ENCODE measurements at regions of chr10 and their contacts with region 1.

Region 1: GRCh38 chr10:132331526-132332432 is at the start of gene LRRC27:
- DNase-seq: peak; percentile 99
- ATAC-seq: peak; percentile 86
- H3K4me3 Mint-ChIP-seq: peak within 1 kb of the TSS; percentile 80
- H3K27ac Mint-ChIP-seq: peak within 1 kb of the TSS; percentile 81
- H3K4me1 Mint-ChIP-seq: peaks cover 56% of the 10 kb centered on the region
- H3K27me3 Mint-ChIP-seq: no peaks in the 10 kb centered on the region
- total RNA-seq, gene LRRC27: 3.6 to 4.1 TPM

Region 2: DNA sequence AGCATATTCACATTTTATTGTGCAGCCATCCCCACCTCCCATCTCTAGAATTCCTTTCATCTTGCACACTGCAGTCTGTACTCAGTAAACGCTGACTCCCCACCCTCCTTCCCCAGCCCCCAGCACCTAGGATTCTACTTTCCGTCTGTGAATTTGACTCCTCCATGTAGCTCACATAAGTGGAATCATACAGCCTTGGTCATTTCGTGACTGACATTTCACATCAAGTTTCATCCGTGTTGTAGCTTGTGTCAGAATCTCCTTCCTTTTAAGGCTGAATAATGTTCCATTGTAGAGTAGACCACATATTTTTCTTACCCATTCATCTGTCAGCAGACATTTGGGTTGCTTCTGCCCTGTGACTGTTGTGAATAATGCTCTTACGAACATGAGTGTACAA is 994.0 kb before region 1 on chr10:
- CTCF ChIA-PET with region 1: no interaction called
- POLR2A ChIA-PET with region 1: no interaction called
- intact Hi-C with region 1: no loop called
- DNase-seq: no peak
- ATAC-seq: no peak
- H3K4me3 Mint-ChIP-seq: no peak overlapping the region
- H3K27ac Mint-ChIP-seq: no peak overlapping the region
- H3K4me1 Mint-ChIP-seq: no peaks in the 10 kb centered on the region
- H3K27me3 Mint-ChIP-seq: peaks cover 4% of the 10 kb centered on the region

Region 3: DNA sequence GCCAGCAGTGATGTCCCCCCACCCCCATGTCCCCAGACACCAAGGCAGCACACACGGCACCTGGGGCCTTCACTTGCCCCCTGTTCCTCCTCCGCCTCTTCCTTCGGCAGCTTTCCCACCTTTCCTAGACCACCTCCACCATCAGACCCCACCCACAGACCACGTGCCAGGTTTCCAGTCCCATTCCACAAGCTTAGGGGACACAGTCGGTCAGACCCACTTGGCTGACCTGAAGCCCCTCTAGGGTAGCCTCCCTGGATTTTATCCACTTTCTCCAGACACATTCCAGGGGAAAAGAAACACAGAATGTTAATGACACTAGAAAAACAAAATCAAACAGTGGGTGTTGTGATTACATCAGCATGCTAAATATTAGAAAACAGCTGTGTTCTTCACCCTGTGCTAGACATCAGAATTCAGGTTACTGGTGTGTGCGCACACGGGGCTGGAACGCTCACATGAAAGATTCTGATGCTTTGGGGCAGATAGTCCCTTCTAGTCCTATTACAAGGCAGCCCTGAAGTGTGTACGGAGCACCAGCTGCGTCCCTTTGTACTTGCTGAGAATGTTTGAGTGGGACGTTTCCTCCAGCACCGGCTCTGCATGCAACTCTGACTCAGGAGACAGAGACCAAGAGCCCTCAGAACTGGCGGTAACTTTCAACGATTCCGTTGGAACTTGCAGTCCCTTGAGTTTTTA is 506.5 kb before region 1 on chr10:
- CTCF ChIA-PET with region 1: no interaction called
- POLR2A ChIA-PET with region 1: no interaction called
- intact Hi-C with region 1: no loop called
- DNase-seq: no peak
- ATAC-seq: no peak
- H3K4me3 Mint-ChIP-seq: no peak overlapping the region
- H3K27ac Mint-ChIP-seq: no peak overlapping the region
- H3K4me1 Mint-ChIP-seq: no peaks in the 10 kb centered on the region
- H3K27me3 Mint-ChIP-seq: peaks cover 13% of the 10 kb centered on the region

Region 4: DNA sequence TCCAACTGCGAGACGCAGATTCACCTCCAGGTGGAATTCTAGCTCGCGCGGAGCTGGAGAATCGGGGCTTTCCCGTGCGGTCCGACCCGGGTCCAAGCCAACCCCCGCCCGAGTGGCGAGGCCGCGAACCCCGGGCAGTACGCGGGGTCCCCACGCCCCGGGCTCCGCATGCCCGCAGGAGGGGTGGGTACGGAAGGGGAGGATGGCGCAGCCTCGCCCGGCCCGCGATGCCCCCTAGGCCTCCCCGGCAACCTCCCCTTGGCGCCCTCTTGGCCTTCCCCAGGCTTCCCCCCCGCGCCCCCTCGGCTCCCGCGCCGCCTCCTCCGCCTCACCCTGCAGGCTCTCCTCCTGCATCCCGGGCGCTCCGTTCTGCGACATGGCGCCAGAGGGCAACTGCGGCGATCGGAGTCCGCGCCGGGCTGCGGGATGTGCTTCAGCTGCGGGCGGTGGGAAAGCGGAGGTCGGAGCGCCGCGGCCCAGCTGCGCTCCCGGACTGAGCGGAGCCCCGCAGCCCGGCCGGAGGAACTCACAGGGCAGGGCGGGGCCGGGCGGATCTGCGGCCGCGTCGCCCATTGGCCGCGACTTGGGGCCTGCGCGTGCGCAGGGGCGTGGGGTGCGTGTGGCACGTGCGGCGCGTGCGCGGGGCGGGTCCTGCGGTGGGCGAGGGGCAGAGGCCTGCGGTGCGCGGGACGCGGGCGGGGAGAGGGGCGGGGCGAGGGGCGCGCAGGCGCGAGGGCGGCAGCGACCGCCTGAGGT is 350.2 kb before region 1 on chr10 and contains the start of gene BNIP3:
- CTCF ChIA-PET with region 1: no interaction called
- POLR2A ChIA-PET with region 1: no interaction called
- intact Hi-C with region 1: loop called in 1 of 2 experiments (anchors 1 kb)
- DNase-seq: peak; percentile 97
- ATAC-seq: peak; percentile 90
- H3K4me3 Mint-ChIP-seq: peak within 1 kb of the TSS; percentile 90
- H3K27ac Mint-ChIP-seq: peak within 1 kb of the TSS; percentile 79
- H3K4me1 Mint-ChIP-seq: peaks cover 36% of the 10 kb centered on the region
- H3K27me3 Mint-ChIP-seq: no peaks in the 10 kb centered on the region
- total RNA-seq, gene BNIP3: 200 to 256 TPM

Region 5: DNA sequence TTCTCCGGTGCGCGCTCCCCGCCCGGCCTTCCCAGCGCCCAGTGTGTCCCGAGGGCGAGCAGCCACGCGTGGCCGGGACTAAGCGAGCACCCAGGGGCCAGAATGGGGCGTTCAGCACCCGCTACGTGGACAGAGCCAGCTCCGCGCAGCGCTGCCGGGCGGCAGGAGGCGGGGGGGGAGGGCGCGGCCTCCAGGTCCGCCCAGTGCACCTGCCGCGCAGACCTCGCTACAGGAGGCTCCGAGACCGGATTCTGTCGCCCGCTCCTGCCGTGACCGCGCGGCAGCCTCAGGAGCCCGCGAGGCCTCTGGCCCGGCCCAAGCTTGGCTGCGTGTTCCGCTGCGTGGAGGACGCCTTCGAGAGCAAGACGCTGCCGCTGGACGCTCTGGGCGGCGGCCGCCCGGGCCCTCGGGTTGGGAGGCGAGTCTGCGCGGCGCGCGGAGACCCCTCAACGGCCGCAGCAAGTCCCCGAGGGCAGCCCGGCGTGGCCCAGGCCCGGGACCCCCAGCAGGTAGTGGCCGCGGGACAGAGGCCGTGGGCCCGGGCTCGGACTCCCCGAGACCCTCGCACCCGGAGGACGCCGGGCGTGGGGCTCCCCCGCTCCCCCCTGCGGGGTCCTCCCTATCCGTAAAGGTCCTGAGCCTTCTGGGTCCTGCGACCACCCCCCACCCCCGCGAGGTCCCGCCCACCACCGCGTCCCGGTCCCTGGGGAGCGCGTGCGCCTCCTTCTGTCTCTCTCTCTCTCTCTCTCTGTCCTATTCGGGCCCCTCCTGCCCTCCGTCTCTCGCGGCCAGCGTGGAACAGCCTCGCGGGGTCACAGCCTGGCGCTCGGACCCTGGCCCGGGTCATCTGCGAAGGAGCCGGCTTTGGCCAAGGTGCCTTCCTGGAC is 145.9 kb before region 1 on chr10:
- CTCF ChIA-PET with region 1: no interaction called
- POLR2A ChIA-PET with region 1: no interaction called
- intact Hi-C with region 1: loop called in 1 of 2 experiments (anchors 1 kb)
- DNase-seq: peak; percentile 76
- ATAC-seq: peak; percentile 85
- H3K4me3 Mint-ChIP-seq: no peak overlapping the region
- H3K27ac Mint-ChIP-seq: no peak overlapping the region
- H3K4me1 Mint-ChIP-seq: peaks cover 3% of the 10 kb centered on the region
- H3K27me3 Mint-ChIP-seq: peaks cover 37% of the 10 kb centered on the region

Region 6: GRCh38 chr10:132346806-132347205 is 15.0 kb after region 1 on chr10:
- CTCF ChIA-PET with region 1: no interaction called
- POLR2A ChIA-PET with region 1: no interaction called
- intact Hi-C with region 1: no loop called
- DNase-seq: no peak
- ATAC-seq: no peak
- H3K4me3 Mint-ChIP-seq: no peak overlapping the region
- H3K27ac Mint-ChIP-seq: no peak overlapping the region
- H3K4me1 Mint-ChIP-seq: no peaks in the 10 kb centered on the region
- H3K27me3 Mint-ChIP-seq: no peaks in the 10 kb centered on the region

Region 7: GRCh38 chr10:132396495-132397035 is 64.8 kb after region 1 on chr10:
- CTCF ChIA-PET with region 1: no interaction called
- POLR2A ChIA-PET with region 1: no interaction called
- intact Hi-C with region 1: loop called in 1 of 2 experiments (anchors 2 kb)
- DNase-seq: peak; percentile 78
- ATAC-seq: peak; percentile 75
- H3K4me3 Mint-ChIP-seq: no peak overlapping the region
- H3K27ac Mint-ChIP-seq: no peak overlapping the region
- H3K4me1 Mint-ChIP-seq: peaks cover 13% of the 10 kb centered on the region
- H3K27me3 Mint-ChIP-seq: no peaks in the 10 kb centered on the region

Region 8: DNA sequence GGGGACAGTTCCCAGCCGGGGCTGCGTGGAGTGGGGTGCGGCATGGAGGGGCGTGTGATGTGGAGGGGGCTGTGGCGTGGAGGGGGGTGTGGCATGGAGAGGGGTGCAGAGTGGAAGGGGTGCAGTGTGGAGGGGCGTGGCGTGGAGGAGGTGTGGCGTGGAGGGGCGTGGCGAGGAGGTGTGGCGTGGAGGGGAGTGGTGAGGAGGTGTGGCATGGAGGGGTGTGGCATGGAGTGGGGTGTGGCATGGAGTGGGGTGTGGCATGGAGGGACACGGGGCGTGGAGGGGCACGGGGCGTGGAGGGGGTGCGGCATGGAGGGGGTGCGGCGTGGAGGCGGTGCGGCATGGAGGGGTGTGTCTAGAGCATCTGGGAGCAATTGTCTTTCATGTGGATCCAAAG is 420.6 kb after region 1 on chr10:
- CTCF ChIA-PET with region 1: no interaction called
- POLR2A ChIA-PET with region 1: no interaction called
- intact Hi-C with region 1: no loop called
- DNase-seq: peak; percentile 12
- ATAC-seq: no peak
- H3K4me3 Mint-ChIP-seq: no peak overlapping the region
- H3K27ac Mint-ChIP-seq: no peak overlapping the region
- H3K4me1 Mint-ChIP-seq: no peaks in the 10 kb centered on the region
- H3K27me3 Mint-ChIP-seq: no peaks in the 10 kb centered on the region

Region 9: DNA sequence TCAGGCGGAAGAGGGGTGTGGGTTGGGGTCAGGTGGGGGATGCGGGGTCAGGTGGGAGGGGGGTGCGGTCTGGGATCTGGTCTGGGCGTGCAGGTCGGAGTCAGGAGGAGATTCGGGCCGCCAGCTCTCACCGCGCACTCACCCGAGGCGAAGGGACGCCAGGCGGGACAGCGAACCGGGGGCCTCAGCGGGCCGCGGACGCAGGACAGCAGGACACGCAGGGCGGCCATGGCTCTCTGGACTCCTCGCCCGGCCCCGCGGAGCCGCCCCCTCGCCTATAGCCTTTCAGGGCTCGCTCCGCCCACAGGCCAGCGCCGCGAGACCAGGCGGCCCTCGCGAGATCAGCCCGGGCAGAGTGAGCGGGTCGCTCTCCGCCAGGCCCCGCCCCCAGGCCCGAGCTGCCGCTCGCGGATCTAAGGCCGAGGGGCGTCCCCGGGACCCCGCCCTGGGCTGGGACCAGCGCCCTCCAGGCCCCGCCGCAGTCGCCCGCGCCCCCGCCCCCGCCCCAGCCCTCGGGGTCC is 1041.4 kb after region 1 on chr10 and contains the start of gene ECHS1:
- CTCF ChIA-PET with region 1: no interaction called
- POLR2A ChIA-PET with region 1: no interaction called
- intact Hi-C with region 1: loop called in 1 of 2 experiments (anchors 10 kb)
- DNase-seq: peak; percentile 97
- ATAC-seq: peak; percentile 100
- H3K4me3 Mint-ChIP-seq: peak within 1 kb of the TSS; percentile 73
- H3K27ac Mint-ChIP-seq: peak within 1 kb of the TSS; percentile 79
- H3K4me1 Mint-ChIP-seq: peaks cover 11% of the 10 kb centered on the region
- H3K27me3 Mint-ChIP-seq: no peaks in the 10 kb centered on the region
- total RNA-seq, gene ECHS1: 42.0 to 56.7 TPM